Activated CD4-positive, alpha-beta T cell treated with anti-CD3 and anti-CD28 coated beads, Interleukin-2, amount 10 ng/mL, durations not matched to agents 24 days and 14 days (primary cell): ENCODE measurements at regions of chr1 and their contacts with region 1.

Region 1: DNA sequence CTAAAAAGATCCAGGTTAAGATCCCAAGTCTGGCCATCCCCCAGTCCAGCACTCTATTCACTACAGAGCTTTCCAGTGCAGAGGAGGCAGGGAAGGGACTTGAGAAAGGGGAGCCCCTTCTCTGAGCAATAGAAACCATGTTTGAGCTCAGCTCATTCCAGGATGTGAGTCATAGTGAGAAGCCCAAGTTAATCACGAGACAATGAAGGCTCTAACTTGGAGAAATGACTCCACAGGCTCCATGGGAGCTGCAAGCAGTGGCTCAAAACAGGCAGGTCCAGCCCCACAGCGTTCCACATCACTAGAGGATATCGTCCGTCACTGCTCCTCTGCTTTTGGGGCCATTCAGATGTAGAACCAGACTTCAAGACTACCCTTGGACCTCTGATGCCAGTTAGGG is 59.1 kb downstream of the CAMK2N1 start:
- DNase-seq: peak; percentile 65
- H3K4me3 Mint-ChIP-seq: no peak overlapping the region
- H3K27ac Mint-ChIP-seq: no peak overlapping the region
- H3K4me1 Mint-ChIP-seq: peaks cover 4% of the 10 kb centered on the region
- H3K27me3 Mint-ChIP-seq: peaks cover 19% of the 10 kb centered on the region

Region 2: GRCh38 chr1:20212685-20213331 is 214.1 kb before region 1 on chr1:
- intact Hi-C with region 1: loop called (anchors 5 kb)
- DNase-seq: peak; percentile 84
- H3K4me3 Mint-ChIP-seq: no peak overlapping the region
- H3K27ac Mint-ChIP-seq: no peak overlapping the region
- H3K4me1 Mint-ChIP-seq: peaks cover 6% of the 10 kb centered on the region
- H3K27me3 Mint-ChIP-seq: peaks cover 45% of the 10 kb centered on the region

Region 3: DNA sequence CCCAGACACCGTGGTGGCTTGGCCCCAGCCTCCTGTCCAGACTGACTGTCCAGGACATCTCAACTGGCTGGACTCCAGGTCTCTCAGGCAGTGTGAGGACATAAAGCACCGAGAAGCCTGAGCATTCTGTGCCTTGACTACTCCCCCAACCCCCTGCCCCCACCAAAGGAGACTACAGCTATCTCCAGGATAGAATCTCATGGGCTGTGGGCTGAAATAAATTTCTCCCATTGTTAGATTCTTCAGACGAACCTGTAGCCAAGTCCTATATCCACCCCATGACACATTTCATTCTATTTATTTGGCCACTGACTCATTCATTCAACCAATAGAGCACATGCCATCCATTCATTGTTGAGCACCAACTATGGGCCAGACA is 124.8 kb before region 1 on chr1:
- intact Hi-C with region 1: no loop called
- DNase-seq: no peak
- H3K4me3 Mint-ChIP-seq: no peak overlapping the region
- H3K27ac Mint-ChIP-seq: no peak overlapping the region
- H3K4me1 Mint-ChIP-seq: no peaks in the 10 kb centered on the region
- H3K27me3 Mint-ChIP-seq: peaks cover 13% of the 10 kb centered on the region

Region 4: DNA sequence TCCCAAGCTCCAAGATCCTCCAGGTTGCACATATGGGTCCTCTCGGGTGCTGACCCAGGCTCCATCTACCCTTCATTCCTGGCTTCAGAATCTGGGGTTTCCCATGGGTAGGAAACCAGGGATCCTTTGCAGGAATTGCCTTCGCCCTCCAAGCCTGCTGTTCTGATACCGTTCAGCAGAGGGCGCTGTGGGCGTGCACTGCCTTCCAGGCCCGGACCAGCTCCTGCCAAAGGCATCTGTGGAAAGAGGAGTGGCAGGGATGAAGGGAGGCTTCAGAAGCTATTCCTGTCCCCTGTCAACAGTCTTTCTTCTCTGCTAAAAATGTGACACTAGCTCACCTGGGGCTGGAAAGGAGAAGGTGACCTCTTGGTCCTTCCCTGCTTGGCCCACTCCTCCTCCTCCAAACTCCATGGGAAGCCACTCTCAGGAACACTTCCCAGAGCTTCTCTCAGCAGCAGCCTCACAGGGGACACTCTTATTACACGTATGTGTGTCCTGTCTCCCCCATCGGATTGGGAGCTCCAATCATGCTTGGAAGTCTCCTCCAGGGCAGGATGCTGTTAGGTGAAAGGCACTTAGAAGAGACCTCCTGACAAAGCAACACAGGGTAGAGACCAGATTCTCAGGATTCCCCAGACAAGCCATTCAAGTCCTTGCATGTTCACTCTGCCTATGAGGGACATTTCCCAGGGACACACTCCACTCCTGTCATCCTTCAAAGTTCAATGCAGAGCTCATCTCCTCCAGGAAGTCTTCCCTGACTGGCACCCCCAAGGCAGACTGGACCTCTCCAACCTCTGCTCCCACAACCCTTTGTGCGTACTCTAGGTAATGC is 64.9 kb before region 1 on chr1:
- intact Hi-C with region 1: loop called (anchors 5 kb)
- DNase-seq: peak; percentile 76
- H3K4me3 Mint-ChIP-seq: no peak overlapping the region
- H3K27ac Mint-ChIP-seq: no peak overlapping the region
- H3K4me1 Mint-ChIP-seq: peaks cover 3% of the 10 kb centered on the region
- H3K27me3 Mint-ChIP-seq: peaks cover 55% of the 10 kb centered on the region